Thyroid gland (tissue), 4 donors: ENCODE measurements at regions of chr18 and their contacts with region 1.

Region 1: GRCh38 chr18:2932247-2933181 is 80.4 kb downstream of the LPIN2 start:
- DNase-seq: peak in 1 of 2 donors; percentile 20
- H3K4me3 ChIP-seq: no peak overlapping the region
- H3K27ac ChIP-seq: no peak overlapping the region
- H3K4me1 ChIP-seq: peaks cover 0 to 5% of the 10 kb centered on the region in 2 donors
- H3K27me3 ChIP-seq: no peaks in the 10 kb centered on the region
- CTCF ChIP-seq: peak; percentile 38 to 85 (median 68)
- POLR2A ChIP-seq: no peak

Region 2: DNA sequence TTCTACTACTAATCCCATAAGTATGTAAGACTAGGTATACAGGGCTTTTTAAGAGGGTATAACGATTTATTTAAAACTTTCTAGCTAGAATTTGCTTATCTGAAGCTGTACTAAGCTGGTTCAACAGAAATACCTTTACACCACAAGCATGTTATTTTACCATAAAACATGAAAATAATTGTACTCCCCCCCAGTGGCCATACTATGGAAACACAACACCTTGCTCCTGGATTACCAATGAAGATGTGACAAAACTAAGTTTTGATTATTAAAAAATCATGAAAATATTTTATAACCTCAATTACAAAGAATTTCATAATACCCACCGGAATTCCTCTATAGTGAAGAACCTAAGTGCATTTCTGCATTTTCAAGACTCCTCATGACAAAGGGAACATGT is 53.1 kb after region 1 on chr18:
- intact Hi-C with region 1: loop called (anchors 10 kb)
- DNase-seq: no peak
- H3K4me3 ChIP-seq: no peak overlapping the region
- H3K27ac ChIP-seq: no peak overlapping the region
- H3K4me1 ChIP-seq: peaks cover 41 to 43% of the 10 kb centered on the region in 2 donors
- H3K27me3 ChIP-seq: no peaks in the 10 kb centered on the region
- CTCF ChIP-seq: peak in 3 of 6 experiments; percentile 40 to 52 (median 52)
- POLR2A ChIP-seq: no peak

Region 3: GRCh38 chr18:3062798-3063680 is 130.5 kb after region 1 on chr18:
- intact Hi-C with region 1: loop called (anchors 5 kb)
- DNase-seq: peak; percentile 59 to 64
- H3K4me3 ChIP-seq: no peak overlapping the region
- H3K27ac ChIP-seq: no peak overlapping the region
- H3K4me1 ChIP-seq: peaks cover 0 to 5% of the 10 kb centered on the region in 2 donors
- H3K27me3 ChIP-seq: no peaks in the 10 kb centered on the region
- CTCF ChIP-seq: peak; percentile 22 to 69 (median 53)
- POLR2A ChIP-seq: no peak

Region 4: DNA sequence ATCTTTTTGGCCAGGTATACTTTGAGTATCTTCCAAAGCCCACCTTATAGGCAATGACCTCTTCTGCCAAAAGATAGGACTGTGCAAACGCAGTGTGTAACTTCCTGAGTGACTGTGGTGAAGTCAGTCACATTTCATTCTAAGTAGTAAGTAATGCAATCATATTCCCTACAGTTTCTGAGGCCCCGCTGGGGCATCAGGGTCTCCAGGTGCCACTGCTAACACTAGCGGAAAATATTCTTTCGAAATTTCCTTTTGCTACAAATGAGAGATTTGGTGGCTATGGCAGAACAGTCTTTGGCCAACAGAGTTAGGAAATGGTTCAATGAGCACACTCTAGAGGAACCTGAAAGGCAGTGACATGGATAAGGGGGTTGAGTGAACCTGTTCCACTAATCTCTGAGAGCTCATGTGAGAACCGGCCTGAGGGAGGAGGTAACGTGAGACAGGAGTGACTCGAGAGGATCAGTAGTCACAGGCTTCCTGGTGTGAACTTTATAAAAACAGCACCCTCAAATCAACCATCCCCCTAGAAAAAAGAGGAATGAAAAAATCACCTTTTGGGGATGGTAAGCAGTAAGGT is 183.0 kb after region 1 on chr18:
- intact Hi-C with region 1: no loop called
- DNase-seq: no peak
- H3K4me3 ChIP-seq: no peak overlapping the region
- H3K27ac ChIP-seq: no peak overlapping the region
- H3K4me1 ChIP-seq: no peaks in the 10 kb centered on the region
- H3K27me3 ChIP-seq: no peaks in the 10 kb centered on the region
- CTCF ChIP-seq: no peak
- POLR2A ChIP-seq: no peak

Region 5: DNA sequence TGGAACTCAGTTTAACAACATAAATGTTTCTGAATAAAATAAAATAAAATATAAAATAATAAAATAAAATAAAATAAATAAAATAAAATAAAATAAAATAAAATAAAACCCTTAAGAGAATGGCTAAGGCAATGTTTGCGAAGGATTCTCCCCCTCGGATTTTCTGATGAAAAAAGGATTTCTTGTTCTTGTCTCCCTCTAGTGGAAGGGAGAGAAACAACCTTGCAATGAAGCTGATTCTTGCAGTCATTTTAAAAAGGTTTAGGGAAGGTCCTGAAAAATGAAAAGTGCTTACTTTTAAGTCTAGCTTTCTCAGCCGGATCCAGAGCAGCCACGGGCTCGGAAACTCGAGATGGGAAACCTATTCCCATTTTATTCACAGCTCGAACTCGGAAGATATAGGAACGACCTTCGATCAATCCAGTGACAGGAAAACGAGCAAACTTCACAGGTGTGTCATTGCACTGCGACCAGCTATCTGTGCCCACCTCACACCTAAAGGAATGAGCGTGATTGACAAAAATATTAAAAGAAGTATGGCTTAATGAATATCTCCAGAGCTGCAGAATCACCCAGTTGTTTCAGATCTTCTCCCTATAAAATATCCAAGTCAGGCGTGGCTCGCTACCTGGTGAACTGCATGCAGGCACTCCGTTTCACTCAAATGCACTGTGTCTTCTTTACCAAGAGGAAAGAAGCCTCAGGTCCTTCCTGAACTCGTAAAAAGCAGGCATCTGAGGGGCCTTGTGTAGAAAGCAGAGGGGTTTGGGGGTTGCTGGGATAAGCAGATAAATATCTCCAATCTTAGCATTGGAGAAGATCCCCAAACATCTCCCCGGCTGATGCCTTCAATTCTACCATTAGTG is 219.1 kb after region 1 on chr18:
- intact Hi-C with region 1: loop called (anchors 5 kb)
- DNase-seq: no peak
- H3K4me3 ChIP-seq: no peak overlapping the region
- H3K27ac ChIP-seq: no peak overlapping the region
- H3K4me1 ChIP-seq: peaks cover 6 to 11% of the 10 kb centered on the region in 2 donors
- H3K27me3 ChIP-seq: no peaks in the 10 kb centered on the region
- CTCF ChIP-seq: peak; percentile 36 to 88 (median 58)
- POLR2A ChIP-seq: no peak

Region 6: GRCh38 chr18:3245853-3246634 is 313.5 kb after region 1 on chr18:
- intact Hi-C with region 1: loop called (anchors 5 kb)
- DNase-seq: peak; percentile 88 to 90
- H3K4me3 ChIP-seq: peak overlapping the region in 2 of 3 donors; percentile 5 to 98
- H3K27ac ChIP-seq: peak overlapping the region; percentile 97 to 100 (median 99)
- H3K4me1 ChIP-seq: peaks cover 5 to 25% of the 10 kb centered on the region in 2 donors
- H3K27me3 ChIP-seq: no peaks in the 10 kb centered on the region
- CTCF ChIP-seq: peak; percentile 80 to 95 (median 94)
- POLR2A ChIP-seq: no peak